Naive thymus-derived CD8-positive, alpha-beta T cell (primary cell): ENCODE measurements at regions of chr11 and their contacts with region 1.

Region 1: GRCh38 chr11:62591448-62592145 is at the start of gene TUT1:
- DNase-seq: peak; percentile 81 to 98 (median 96)
- ATAC-seq: peak; percentile 84 to 86
- H3K4me3 Mint-ChIP-seq: peak within 1 kb of the TSS; percentile 85 to 97 (median 94)
- H3K27ac Mint-ChIP-seq: peak within 1 kb of the TSS; percentile 95 to 99 (median 98)
- H3K4me1 Mint-ChIP-seq: peaks cover 15 to 60% (median 51%) of the 10 kb centered on the region in 4 donors
- H3K27me3 Mint-ChIP-seq: peaks cover 0 to 3% (median 0%) of the 10 kb centered on the region in 5 donors
- polyA plus RNA-seq, gene TUT1: 12.8 to 24.4 (median 16.9) TPM

Region 2: GRCh38 chr11:62256281-62256680 is 335.3 kb before region 1 on chr11:
- POLR2A ChIA-PET with region 1: no interaction called
- DNase-seq: no peak
- ATAC-seq: no peak
- H3K4me3 Mint-ChIP-seq: no peak overlapping the region
- H3K27ac Mint-ChIP-seq: no peak overlapping the region
- H3K4me1 Mint-ChIP-seq: no peaks in the 10 kb centered on the region
- H3K27me3 Mint-ChIP-seq: peaks cover 3 to 24% (median 5%) of the 10 kb centered on the region in 5 donors

Region 3: GRCh38 chr11:62497132-62497915 is 94.3 kb before region 1 on chr11:
- POLR2A ChIA-PET with region 1: no interaction called
- DNase-seq: peak in 2 of 10 donors; percentile 8 to 9
- ATAC-seq: peak; percentile 20 to 52
- H3K4me3 Mint-ChIP-seq: no peak overlapping the region
- H3K27ac Mint-ChIP-seq: peak overlapping the region in 2 of 10 donors; percentile 3 to 14
- H3K4me1 Mint-ChIP-seq: peaks cover 0 to 11% (median 1%) of the 10 kb centered on the region in 4 donors
- H3K27me3 Mint-ChIP-seq: peaks cover under 1 to 9% (median 7%) of the 10 kb centered on the region in 5 donors

Region 4: GRCh38 chr11:62573592-62574362 is 17.8 kb before region 1 on chr11 and contains the start of gene EEF1G:
- POLR2A ChIA-PET with region 1: interaction called, 104 read pairs
- DNase-seq: peak; percentile 94 to 100 (median 98)
- ATAC-seq: peak; percentile 91 to 92
- H3K4me3 Mint-ChIP-seq: peak within 1 kb of the TSS; percentile 93 to 99 (median 97)
- H3K27ac Mint-ChIP-seq: peak within 1 kb of the TSS; percentile 90 to 99 (median 98)
- H3K4me1 Mint-ChIP-seq: peaks cover 41 to 59% (median 53%) of the 10 kb centered on the region in 4 donors
- H3K27me3 Mint-ChIP-seq: no peaks in the 10 kb centered on the region
- polyA plus RNA-seq, gene EEF1G: 1,637 to 2,152 (median 1,960) TPM

Region 5: GRCh38 chr11:62652161-62653006 is 60.8 kb after region 1 on chr11:
- POLR2A ChIA-PET with region 1: interaction called, 52 read pairs
- DNase-seq: peak in 4 of 10 donors; percentile 34 to 57 (median 44)
- ATAC-seq: peak; percentile 6 to 49
- H3K4me3 Mint-ChIP-seq: peak overlapping the region; percentile 86 to 96 (median 92)
- H3K27ac Mint-ChIP-seq: peak overlapping the region; percentile 82 to 100 (median 94)
- H3K4me1 Mint-ChIP-seq: peaks cover 12 to 37% (median 21%) of the 10 kb centered on the region in 4 donors
- H3K27me3 Mint-ChIP-seq: no peaks in the 10 kb centered on the region

Region 6: GRCh38 chr11:62705880-62706849 is 114.6 kb after region 1 on chr11:
- POLR2A ChIA-PET with region 1: interaction called, 91 read pairs
- DNase-seq: peak; percentile 89 to 98 (median 94)
- ATAC-seq: peak; percentile 62
- H3K4me3 Mint-ChIP-seq: peak overlapping the region; percentile 85 to 95 (median 90)
- H3K27ac Mint-ChIP-seq: peak overlapping the region; percentile 88 to 100 (median 96)
- H3K4me1 Mint-ChIP-seq: peaks cover 24 to 56% (median 42%) of the 10 kb centered on the region in 4 donors
- H3K27me3 Mint-ChIP-seq: no peaks in the 10 kb centered on the region

Region 7: DNA sequence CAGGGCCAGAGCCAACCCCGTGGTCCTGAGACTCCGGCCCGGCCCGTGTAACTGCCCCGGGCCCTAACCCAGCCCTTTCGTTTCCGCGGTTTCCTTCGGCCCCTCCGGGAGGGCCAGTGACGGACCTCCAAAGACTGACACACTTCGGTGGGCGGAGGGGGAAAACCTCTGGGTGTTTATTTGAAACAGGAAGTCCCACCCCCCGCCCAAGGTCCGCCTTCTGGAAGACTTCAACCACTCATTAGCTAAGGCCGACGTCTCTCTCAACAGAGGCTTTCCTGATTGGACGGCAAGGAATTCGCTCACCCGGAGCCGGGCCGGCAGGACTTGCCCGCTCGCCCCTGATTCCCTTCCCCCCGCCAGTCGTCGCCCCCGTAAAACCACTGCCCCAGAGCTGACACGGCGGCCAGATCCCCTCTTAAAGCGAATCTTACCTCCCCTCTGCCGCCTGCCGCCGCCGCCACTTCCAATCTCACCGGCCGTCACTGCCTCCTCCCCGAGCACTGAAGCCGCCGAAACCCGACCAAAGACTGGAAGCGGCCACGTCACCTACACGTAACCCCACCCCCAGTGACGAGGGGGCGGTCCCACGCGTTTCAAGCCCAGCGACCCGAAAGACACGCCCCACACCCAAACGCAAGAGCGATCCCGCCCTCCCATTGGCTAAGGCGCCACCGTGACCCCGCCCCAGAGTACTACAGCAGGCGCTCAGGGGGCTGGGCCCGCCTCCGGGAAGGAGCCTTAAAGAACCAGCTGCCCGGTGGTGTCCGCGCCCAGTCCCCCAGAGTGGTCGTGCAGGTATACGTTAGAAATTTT is 240.1 kb after region 1 on chr11 and contains the start of gene STX5:
- POLR2A ChIA-PET with region 1: interaction called, 13 read pairs
- DNase-seq: peak; percentile 99 to 100 (median 100)
- ATAC-seq: peak; percentile 89 to 90
- H3K4me3 Mint-ChIP-seq: peak within 1 kb of the TSS; percentile 93 to 99 (median 98)
- H3K27ac Mint-ChIP-seq: peak within 1 kb of the TSS; percentile 91 to 100 (median 100)
- H3K4me1 Mint-ChIP-seq: peaks cover 25 to 56% (median 48%) of the 10 kb centered on the region in 4 donors
- H3K27me3 Mint-ChIP-seq: no peaks in the 10 kb centered on the region
- polyA plus RNA-seq, gene STX5: 25.4 to 30.4 (median 26.2) TPM